Left cardiac atrium (tissue), 4 donors: ENCODE measurements at regions of chr6 and their contacts with region 1.

Region 1: GRCh38 chr6:145814501-145815308 is at the start of gene FBXO30:
- DNase-seq: peak; percentile 90
- ATAC-seq: peak; percentile 97 to 98
- total RNA-seq, gene FBXO30: 10.1 to 11.7 TPM

Region 2: GRCh38 chr6:145734486-145735355 is 80.0 kb before region 1 on chr6:
- intact Hi-C with region 1: loop called (anchors 2 to 10 kb)
- DNase-seq: peak; percentile 95
- ATAC-seq: peak; percentile 90 to 95

Region 3: DNA sequence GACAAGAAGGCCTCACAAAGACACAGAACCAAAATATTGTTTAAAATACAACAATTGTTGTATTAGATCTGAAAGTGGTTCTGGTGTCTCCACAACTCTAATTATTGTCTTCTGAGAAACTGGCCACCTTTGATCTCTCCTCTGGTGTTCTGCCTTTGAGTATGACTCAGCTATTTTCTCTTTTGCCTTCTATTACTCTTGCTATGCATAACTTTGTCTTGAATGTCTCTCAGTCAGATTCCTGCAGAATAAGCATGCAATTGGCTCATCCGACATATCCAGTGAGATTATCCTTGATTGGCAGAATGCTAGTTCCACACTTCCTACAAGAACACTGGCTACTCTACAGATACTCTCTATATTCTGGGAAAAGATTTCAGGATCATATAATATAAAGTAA is 65.1 kb before region 1 on chr6:
- intact Hi-C with region 1: no loop called
- DNase-seq: no peak
- ATAC-seq: peak; percentile 34 to 70

Region 4: DNA sequence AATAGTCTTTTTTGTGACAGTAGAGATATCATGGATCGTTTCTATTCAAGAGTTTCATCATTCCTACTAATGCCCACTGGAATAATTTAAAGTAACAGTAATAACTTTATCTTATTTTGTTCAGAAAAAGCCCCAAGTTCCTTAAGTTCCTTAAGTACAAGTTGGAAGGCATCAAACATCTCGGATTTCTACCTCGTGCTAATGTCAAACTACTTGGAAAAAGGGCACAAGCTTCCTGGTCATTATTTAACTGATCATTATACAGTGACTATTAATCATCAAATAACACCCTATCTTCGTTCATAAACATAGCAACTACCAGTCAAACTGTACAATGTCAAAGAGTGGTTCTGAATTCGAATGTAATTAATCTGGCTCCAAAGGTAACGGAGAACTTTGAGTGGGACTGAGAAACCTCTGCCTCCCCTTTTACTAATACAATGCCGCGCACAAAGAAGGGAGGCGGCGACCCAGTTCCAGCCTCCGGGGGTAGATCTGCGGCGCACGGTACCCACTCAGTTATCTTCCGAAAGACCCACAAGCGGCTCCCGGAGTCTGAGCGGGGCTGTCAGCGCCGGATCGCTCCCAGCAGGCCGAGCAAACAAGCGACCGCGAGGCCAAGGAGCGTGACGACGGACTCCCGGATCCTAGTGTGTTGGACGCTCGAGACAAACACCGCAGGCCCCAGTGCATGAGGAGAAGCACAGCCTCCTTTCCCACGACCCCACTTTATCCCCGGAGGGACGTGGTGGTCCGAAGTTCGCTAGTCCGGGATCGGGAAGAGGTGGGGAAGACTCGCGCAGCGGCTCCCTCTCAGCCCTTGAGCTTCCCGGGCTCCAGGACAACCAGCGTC is 148.7 kb after region 1 on chr6:
- intact Hi-C with region 1: loop called in 1 of 2 experiments (anchors 10 kb)
- DNase-seq: peak; percentile 48
- ATAC-seq: peak; percentile 53 to 63